CD14-positive monocyte (primary cell): ENCODE measurements at regions of chr5 and their contacts with region 1.

Region 1: DNA sequence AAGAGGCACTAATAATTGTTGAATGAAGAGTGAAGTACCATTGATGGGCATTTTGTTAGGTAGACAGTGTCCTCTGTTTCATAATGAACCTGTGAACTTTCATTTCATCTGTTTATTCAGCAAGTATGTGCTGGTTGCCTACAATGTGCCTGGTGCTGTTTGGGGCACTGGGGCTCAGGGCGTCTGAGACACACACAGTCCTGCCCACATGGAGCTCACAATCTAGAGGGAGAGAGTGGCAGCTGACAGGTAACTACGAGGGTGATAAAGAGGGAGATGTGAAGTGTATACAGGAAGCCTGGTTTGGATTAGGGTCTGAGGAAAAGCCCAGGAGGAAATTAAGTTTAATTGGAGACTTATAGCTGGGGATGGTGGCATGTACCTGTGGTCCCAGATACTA is 28.5 kb upstream of the NDST1 start:
- DNase-seq: peak in 1 of 3 donors; percentile 2
- H3K4me3 ChIP-seq: no peak overlapping the region
- H3K4me3 Mint-ChIP-seq: no peak overlapping the region
- H3K27ac ChIP-seq: no peak overlapping the region
- H3K27ac Mint-ChIP-seq: peak overlapping the region in 6 of 7 donors; percentile 13 to 92 (median 68)
- H3K4me1 ChIP-seq: peaks cover 36 to 49% of the 10 kb centered on the region in 2 donors
- H3K4me1 Mint-ChIP-seq: peaks cover 56% of the 10 kb centered on the region
- H3K27me3 ChIP-seq: no peaks in the 10 kb centered on the region
- H3K27me3 Mint-ChIP-seq: peaks cover 0 to 20% (median 3%) of the 10 kb centered on the region in 3 donors
- CTCF ChIP-seq: no peak

Region 2: DNA sequence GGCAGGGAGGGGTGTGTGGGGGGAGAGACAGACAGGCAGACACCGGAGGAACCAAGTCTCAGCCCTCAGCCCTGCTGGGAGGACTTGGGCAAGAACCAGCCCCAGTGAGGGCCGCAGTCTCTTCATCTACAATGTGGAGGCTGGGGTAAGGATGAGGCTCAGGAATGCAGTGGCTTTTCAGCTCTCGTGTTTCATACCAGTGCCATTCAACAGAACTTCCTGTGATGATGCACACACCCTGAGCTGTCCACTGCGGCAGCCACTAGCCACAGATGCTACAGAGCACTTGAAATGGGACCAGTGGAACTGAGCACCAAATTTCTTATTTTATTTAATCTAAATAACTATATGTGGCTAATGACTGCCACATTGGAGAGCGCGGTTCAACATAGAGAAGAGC is 200.5 kb before region 1 on chr5:
- intact Hi-C with region 1: no loop called
- DNase-seq: no peak
- H3K4me3 ChIP-seq: no peak overlapping the region
- H3K4me3 Mint-ChIP-seq: no peak overlapping the region
- H3K27ac ChIP-seq: no peak overlapping the region
- H3K27ac Mint-ChIP-seq: no peak overlapping the region
- H3K4me1 ChIP-seq: no peaks in the 10 kb centered on the region
- H3K4me1 Mint-ChIP-seq: peaks cover 2% of the 10 kb centered on the region
- H3K27me3 ChIP-seq: no peaks in the 10 kb centered on the region
- H3K27me3 Mint-ChIP-seq: peaks cover 4 to 7% (median 5%) of the 10 kb centered on the region in 3 donors
- CTCF ChIP-seq: no peak

Region 3: DNA sequence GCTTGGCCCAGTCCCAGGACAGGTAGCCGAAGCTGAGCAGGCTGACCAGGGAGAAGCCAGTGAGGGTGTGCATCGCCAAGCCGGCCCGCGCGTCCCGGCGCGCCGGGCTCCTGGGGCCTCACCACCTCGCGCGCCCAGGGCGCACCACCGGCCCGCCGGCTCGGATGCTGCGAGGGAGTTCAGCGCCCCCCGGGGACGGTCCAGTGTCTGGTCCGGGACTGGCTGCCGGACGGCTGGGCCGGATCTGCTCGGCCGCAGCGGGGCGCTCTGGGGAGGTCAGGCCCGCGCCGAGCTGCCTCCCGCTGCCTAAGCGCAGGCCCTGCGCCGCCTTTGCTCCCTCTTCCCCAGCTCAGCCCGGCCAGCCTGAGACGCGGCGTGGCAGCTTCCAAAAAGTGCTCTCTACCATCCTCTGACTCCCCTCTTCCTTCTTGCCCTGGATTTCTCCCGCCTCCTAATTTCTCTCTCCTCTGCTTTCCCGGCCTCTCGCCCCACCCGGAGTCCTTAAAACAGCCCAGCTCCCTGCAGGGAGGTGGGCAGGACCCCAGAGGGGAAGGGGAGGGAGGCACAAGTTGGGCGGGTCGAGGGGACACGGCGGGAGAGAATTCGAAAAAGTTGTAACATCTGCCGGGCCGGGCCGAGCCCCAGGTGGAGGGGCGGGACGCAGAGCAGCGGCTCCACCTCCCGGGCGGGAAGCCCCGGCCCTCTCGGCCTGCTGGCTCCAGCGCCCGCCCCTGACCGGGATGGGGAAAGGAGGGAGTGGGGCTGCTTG is 176.9 kb before region 1 on chr5 and contains the start of gene ARSI:
- intact Hi-C with region 1: no loop called
- DNase-seq: no peak
- H3K4me3 ChIP-seq: no peak within 1 kb of the TSS
- H3K4me3 Mint-ChIP-seq: peak within 1 kb of the TSS in 1 of 2 donors; percentile 76
- H3K27ac ChIP-seq: no peak within 1 kb of the TSS
- H3K27ac Mint-ChIP-seq: no peak within 1 kb of the TSS
- H3K4me1 ChIP-seq: no peaks in the 10 kb centered on the region
- H3K4me1 Mint-ChIP-seq: peaks cover 2% of the 10 kb centered on the region
- H3K27me3 ChIP-seq: peaks cover 31 to 46% of the 10 kb centered on the region in 2 donors
- H3K27me3 Mint-ChIP-seq: peaks cover 33 to 50% (median 40%) of the 10 kb centered on the region in 3 donors
- CTCF ChIP-seq: no peak
- polyA plus RNA-seq, gene ARSI: not detected

Region 4: DNA sequence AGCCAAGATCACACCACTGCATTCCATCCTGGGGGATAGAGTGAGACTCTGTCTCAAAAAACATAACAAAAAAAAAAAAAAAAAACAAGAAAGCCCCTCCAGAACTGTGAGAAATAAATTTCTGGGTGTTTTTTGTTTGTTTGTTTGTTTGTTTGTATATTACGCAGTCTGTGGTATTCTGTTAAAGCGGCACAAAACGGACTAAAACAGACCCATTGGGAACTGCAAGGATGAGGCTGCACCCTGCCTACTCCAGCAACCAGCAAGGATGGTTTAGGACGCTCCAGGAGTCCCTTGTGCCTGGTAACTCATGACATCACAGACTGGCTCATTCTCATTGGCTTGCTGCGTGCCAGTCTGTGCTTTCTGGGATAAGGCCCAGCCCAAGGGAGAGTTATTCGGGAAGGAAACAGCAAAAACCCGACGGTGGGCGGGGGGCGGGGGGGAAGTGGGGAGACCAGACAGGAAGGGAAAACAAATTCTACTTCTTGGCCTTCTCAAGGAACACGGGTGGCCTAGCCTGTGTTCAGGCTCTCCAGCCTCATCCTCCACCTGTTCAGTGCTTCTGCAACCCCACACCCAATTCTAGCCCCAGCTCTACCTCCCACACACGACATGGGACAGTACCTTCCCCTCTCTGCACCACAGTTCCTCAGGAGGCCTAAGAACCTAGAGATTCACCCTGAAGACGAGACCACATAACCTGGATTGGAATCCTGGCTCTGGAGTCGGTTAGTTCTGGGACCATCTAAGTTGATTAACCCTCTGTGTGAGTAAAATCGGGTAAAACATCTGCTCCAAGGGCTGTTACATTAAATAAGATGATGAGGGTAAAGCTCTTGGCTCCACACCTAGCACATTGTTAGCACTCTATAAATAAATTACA is 69.5 kb before region 1 on chr5:
- intact Hi-C with region 1: loop called in 1 of 2 experiments (anchors 5 kb)
- DNase-seq: peak; percentile 69 to 86 (median 85)
- H3K4me3 ChIP-seq: peak overlapping the region; percentile 98 to 100 (median 100)
- H3K4me3 Mint-ChIP-seq: peak overlapping the region; percentile 97 to 99
- H3K27ac ChIP-seq: peak overlapping the region; percentile 98 to 99
- H3K27ac Mint-ChIP-seq: peak overlapping the region; percentile 98 to 100 (median 99)
- H3K4me1 ChIP-seq: peaks cover 44 to 63% of the 10 kb centered on the region in 2 donors
- H3K4me1 Mint-ChIP-seq: peaks cover 51% of the 10 kb centered on the region
- H3K27me3 ChIP-seq: no peaks in the 10 kb centered on the region
- H3K27me3 Mint-ChIP-seq: peaks cover 0 to 12% (median 0%) of the 10 kb centered on the region in 3 donors
- CTCF ChIP-seq: no peak